ENCODE measurements at regions of chr1 and their contacts with region 1.

Region 1: GRCh38 chr1:226083302-226084101 is 21.0 kb downstream of the H3-3A start:
- DNase-seq: peak; percentile 94
- ATAC-seq: peak; percentile 92
- H3K4me3 Mint-ChIP-seq: peak overlapping the region; percentile 75
- H3K27ac Mint-ChIP-seq: peak overlapping the region; percentile 65
- H3K4me1 Mint-ChIP-seq: peaks cover 9% of the 10 kb centered on the region
- H3K27me3 Mint-ChIP-seq: no peaks in the 10 kb centered on the region

Region 2: DNA sequence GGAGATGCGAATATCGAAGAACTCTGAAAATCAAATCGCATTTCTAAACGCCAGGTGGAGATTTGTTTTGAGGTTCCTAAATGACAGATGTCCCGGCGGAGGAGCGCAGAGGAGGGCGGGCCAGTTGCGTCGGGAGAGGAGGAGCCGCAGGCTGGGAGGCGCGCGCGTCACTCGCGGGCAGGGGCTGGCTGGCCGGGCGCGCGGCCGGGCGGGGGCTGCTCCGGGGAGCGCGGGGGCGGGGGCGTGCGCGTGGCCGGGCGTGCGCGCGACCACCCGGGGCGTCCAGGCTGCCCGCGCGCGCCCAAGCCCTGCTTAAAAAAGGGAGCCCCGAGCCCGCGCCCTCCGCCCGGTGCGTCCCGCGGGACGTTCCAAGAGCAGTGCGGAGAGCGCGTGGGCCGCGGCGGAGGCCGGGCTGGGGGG is 26.3 kb after region 1 on chr1:
- CTCF ChIA-PET with region 1: interaction called, 8 read pairs
- POLR2A ChIA-PET with region 1: interaction called, 11 read pairs
- intact Hi-C with region 1: loop called in 1 of 2 experiments (anchors 1 kb)
- DNase-seq: peak; percentile 90
- ATAC-seq: peak; percentile 90
- H3K4me3 Mint-ChIP-seq: peak overlapping the region; percentile 81
- H3K27ac Mint-ChIP-seq: peak overlapping the region; percentile 59
- H3K4me1 Mint-ChIP-seq: peaks cover 9% of the 10 kb centered on the region
- H3K27me3 Mint-ChIP-seq: no peaks in the 10 kb centered on the region

Region 3: DNA sequence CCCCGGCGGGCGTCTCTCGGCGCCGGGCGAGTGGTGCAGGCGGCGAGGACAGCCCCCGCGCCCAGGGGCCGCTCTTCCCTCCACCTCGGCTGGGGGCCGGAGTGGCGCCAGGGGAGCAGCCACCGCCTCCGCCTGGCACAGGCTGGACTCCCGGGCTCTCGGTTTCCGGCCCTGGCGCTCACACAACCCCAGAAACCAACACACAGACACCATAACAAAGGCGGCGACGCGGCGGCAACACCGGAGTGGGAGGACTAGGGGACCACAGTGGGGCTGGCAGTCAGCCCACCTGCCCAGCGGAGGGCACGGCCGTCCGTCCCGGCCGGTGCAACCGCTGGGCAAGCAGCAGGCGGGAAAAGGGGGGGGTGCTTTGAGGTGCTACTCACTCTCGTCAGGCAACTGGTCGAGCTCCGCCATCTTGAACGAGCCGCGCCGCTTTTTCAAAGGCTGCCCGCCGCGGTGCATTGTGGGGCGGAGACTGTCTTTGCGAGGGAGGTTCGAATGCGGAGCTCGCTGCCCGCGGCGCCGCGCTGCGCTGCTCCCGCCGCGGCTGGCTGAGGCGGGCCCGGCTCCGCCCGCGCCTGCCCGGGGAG is 225.3 kb after region 1 on chr1 and contains the start of gene LIN9:
- CTCF ChIA-PET with region 1: no interaction called
- POLR2A ChIA-PET with region 1: no interaction called
- intact Hi-C with region 1: loop called in 1 of 2 experiments (anchors 2 kb)
- DNase-seq: peak; percentile 97
- ATAC-seq: peak; percentile 87
- H3K4me3 Mint-ChIP-seq: peak within 1 kb of the TSS; percentile 83
- H3K27ac Mint-ChIP-seq: peak within 1 kb of the TSS; percentile 86
- H3K4me1 Mint-ChIP-seq: peaks cover 15% of the 10 kb centered on the region
- H3K27me3 Mint-ChIP-seq: peaks cover 10% of the 10 kb centered on the region
- total RNA-seq, gene LIN9: 10.6 TPM

Region 4: DNA sequence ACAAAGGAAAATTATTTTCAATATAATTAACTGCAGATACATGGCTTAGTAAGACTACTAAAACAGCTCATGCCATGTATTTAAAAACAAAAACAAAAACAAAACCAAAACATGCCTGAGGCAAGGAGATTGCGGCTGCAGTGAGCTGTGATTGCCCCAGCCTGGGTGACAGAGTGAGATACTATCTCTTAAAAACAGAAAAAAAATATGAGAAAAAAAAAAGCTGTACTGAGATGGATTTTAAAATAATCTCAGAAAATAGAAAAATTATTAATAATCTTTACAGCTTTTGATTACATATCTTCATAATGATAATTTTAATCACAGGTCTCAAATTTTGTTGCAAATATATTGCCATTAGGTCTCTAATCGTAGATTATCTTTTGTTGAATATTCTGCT is 249.4 kb after region 1 on chr1:
- CTCF ChIA-PET with region 1: no interaction called
- POLR2A ChIA-PET with region 1: no interaction called
- intact Hi-C with region 1: no loop called
- DNase-seq: no peak
- ATAC-seq: no peak
- H3K4me3 Mint-ChIP-seq: peak overlapping the region; percentile 17
- H3K27ac Mint-ChIP-seq: no peak overlapping the region
- H3K4me1 Mint-ChIP-seq: peaks cover 13% of the 10 kb centered on the region
- H3K27me3 Mint-ChIP-seq: no peaks in the 10 kb centered on the region